ENCODE measurements at regions of chr7 and their contacts with region 1.

Region 1: DNA sequence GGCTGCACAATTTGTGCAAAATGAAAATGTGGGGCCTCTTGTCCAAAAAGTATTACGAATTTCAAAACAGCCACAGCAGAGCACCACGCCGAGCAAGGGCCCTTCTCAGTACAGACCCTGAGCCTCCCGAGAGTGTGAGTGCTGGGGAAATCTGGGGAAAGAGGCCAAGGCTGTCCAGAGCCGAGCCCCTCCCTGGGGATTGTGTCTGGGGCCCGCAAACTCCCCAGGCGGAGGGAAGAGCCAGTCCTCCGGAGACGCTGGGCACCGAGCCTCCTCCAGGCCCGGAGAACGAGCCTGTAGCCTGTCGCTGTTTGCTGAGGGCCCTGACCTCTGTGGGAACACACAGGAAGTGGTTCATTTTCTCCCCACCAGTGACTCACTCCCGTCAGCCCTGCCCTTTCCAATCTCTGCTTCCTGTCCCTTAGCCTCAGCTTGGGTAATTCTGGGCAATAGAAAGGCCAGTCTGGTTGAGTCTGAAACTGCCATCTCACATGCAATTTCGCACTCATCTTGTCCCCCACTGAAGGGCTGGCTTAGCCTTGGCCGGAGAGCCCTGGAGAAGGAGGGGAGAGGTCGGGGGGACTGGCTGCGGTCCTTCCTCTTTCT is 19.5 kb upstream of the GNA12 start:
- DNase-seq: peak; percentile 71
- H3K4me3 Mint-ChIP-seq: peak overlapping the region; percentile 68
- H3K27ac Mint-ChIP-seq: peak overlapping the region; percentile 94
- H3K4me1 Mint-ChIP-seq: peaks cover 23% of the 10 kb centered on the region
- H3K27me3 Mint-ChIP-seq: no peaks in the 10 kb centered on the region

Region 2: DNA sequence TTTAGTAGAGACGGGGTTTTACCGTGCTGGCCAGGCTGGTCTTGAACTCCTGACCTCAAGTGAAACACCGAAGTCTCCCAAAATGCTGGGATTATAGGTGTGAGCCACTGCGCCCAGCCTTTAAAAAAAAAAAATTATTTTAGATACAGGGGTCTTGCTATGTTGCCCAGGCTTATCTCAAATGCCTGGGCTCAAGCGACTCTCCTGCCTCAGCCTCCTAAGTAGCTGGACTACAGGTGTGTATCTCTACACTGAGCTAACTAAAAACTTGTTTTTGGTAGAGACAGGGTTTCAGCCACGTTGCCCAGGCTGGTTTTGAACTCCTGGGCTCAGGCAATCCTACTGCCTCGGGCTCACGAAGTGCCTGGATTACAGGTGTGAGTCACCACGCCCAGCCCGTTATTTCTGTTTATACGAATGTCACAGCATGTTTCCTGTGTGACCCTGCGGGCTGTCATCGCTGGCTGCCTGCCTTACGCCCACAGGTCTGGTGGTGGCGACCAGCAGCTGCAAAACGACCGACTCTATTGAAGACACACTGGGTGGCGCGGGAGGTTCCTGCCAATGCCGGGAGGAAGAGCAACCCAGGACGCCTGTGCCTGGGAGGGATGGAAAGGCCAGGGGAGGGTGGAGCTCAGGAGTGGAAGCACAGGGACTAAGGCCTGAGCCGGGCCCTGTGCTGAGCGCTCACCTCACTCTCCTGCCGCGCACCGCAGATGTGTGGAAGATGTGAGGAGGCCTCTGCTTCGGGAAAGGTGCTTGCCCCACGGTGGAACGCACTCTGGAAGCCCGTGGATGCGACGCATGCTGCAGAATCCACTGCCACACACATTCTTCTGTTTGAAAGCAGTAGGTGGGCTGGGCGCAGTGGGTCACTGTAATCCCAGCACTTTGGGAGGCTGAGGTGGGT is 142.7 kb before region 1 on chr7:
- intact Hi-C with region 1: loop called (anchors 5 kb)
- DNase-seq: peak; percentile 60
- H3K4me3 Mint-ChIP-seq: no peak overlapping the region
- H3K27ac Mint-ChIP-seq: peak overlapping the region; percentile 42
- H3K4me1 Mint-ChIP-seq: peaks cover 43% of the 10 kb centered on the region
- H3K27me3 Mint-ChIP-seq: no peaks in the 10 kb centered on the region

Region 3: GRCh38 chr7:2851497-2851896 is 12.1 kb before region 1 on chr7:
- intact Hi-C with region 1: loop called (anchors 1 kb)
- DNase-seq: no peak
- H3K4me3 Mint-ChIP-seq: no peak overlapping the region
- H3K27ac Mint-ChIP-seq: peak overlapping the region; percentile 78
- H3K4me1 Mint-ChIP-seq: peaks cover 5% of the 10 kb centered on the region
- H3K27me3 Mint-ChIP-seq: no peaks in the 10 kb centered on the region

Region 4: GRCh38 chr7:3065724-3066143 is 202.2 kb after region 1 on chr7:
- intact Hi-C with region 1: loop called (anchors 10 kb)
- DNase-seq: peak; percentile 45
- H3K4me3 Mint-ChIP-seq: no peak overlapping the region
- H3K27ac Mint-ChIP-seq: peak overlapping the region; percentile 18
- H3K4me1 Mint-ChIP-seq: peaks cover 75% of the 10 kb centered on the region
- H3K27me3 Mint-ChIP-seq: no peaks in the 10 kb centered on the region

Region 5: GRCh38 chr7:3300651-3301378 is 437.3 kb after region 1 on chr7 and contains the start of gene SDK1:
- intact Hi-C with region 1: loop called (anchors 10 kb)
- DNase-seq: peak; percentile 87
- H3K4me3 Mint-ChIP-seq: peak within 1 kb of the TSS; percentile 66
- H3K27ac Mint-ChIP-seq: no peak within 1 kb of the TSS
- H3K4me1 Mint-ChIP-seq: peaks cover 17% of the 10 kb centered on the region
- H3K27me3 Mint-ChIP-seq: peaks cover 59% of the 10 kb centered on the region
- total RNA-seq, gene SDK1: 0.48 and 1.2 TPM in 2 replicates

Region 6: GRCh38 chr7:3897438-3898385 is 1034.1 kb after region 1 on chr7:
- intact Hi-C with region 1: loop called (anchors 1 kb)
- DNase-seq: peak; percentile 16
- H3K4me3 Mint-ChIP-seq: no peak overlapping the region
- H3K27ac Mint-ChIP-seq: no peak overlapping the region
- H3K4me1 Mint-ChIP-seq: no peaks in the 10 kb centered on the region
- H3K27me3 Mint-ChIP-seq: peaks cover 2% of the 10 kb centered on the region

Measured in activated T-helper 2 cell treated with anti-CD3 and anti-CD28 coated beads, Interferon-gamma antibody, Interleukin-2, Interleukin-4, amounts not matched to agents 10 μg/mL and 5 μg/mL and 100 μg/mL, durations not matched to agents 14 hours and 24 hours and 36 hours (primary cell).